Posterior cingulate gyrus (tissue), 11 donors: ENCODE measurements at regions of chr13 and their contacts with region 1.

Region 1: GRCh38 chr13:50393628-50394027 is 378.4 kb downstream of the KCNRG start:
- DNase-seq: peak in 3 of 10 donors; percentile 38 to 77 (median 74)

Region 2: GRCh38 chr13:50244713-50245574 is 148.7 kb before region 1 on chr13:
- intact Hi-C with region 1: no loop called
- DNase-seq: no peak

Region 3: DNA sequence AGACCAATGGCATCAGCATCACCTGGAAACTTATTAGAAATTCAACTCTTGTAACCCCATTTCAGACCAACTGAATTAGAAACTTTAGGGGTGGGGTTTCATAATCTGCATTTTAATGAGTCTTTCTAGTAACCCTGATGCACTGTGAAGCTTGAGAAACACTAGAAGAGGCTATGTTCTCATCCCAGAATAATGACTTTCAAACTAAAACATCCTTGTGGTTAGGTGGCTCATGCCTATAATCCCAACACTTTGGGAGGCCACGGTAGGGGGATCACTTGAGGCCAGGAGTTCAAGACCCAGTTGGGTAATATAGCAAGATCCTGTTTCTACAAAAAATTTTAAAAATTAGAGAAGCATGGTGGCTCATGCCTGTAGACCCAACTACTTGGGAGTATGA is 47.5 kb after region 1 on chr13:
- intact Hi-C with region 1: no loop called
- DNase-seq: no peak

Region 4: DNA sequence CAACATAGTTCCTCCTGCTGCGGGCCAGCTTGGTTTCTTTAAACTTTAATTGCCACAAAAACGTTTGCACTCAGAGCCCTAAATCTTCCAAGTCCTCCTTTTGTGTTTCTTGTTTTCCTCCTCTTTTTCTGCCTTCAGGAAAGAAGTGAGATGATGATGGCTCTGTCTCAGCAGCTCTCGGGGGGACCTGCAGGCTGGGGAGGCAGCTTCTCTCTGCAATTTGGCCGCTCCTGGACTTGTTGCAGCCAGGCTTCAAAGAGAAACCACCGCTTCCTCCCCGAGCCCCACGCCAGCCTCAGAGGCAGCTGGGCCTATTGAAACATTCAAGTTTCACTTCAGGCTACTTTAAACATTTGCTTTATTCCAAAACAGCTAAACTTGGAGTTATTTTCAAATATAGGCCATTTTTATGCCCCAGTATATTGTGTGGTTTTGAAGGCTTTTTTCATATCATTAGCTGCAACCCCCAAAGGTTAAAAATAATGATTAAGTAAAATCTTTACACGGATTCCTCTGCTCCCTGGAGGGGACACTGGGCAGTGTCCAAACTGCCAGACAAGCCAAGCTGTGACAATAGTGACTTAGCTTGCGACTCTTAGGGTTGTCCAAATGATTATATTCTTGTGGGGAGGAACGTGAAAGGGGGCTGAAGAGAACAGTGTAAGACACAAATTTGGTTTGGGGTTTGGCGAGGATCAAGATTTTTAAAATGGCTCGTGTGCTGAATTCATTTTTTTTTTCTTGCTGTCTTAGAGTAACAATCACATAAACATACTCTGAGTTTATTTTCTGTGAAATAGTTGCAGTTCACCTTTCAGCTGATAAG is 119.1 kb after region 1 on chr13:
- intact Hi-C with region 1: loop called (anchors 10 kb)
- DNase-seq: peak in 8 of 10 donors; percentile 28 to 90 (median 50)

Region 5: GRCh38 chr13:51125498-51126226 is 732.0 kb after region 1 on chr13:
- intact Hi-C with region 1: no loop called
- DNase-seq: peak in 8 of 10 donors; percentile 49 to 93 (median 54)